Mammary epithelial cell (primary cell): ENCODE measurements at regions of chr3 and their contacts with region 1.

Region 1: DNA sequence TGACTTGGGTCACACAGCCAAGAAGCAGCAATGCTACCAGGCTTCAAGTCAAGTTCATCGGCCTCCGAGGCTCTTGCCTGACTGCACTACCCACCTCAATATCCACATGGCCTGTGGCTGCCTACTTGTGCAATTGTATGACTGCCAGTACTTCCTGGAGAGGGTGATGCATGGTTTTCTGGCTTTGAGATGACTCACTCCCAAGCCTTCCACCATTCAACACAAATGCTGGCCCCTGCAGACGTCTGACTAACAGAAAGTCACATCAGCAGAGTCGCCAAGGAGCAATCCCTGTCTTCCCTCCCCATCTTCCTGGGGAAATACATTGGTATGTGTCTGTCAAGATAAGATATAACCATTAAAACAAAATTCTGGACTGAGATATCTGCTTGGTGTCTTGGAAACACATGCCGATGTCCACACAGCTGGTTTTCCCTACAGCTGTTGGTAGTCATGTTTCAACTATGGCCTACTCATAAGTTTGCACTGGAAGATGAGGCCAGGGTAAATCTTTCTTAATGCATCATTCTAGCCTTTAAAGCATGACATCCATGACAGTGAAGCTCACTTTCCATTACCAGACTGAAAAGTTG is 79.6 kb upstream of the SPATA12 start:
- DNase-seq: peak; percentile 95
- H3K4me3 ChIP-seq: no peak overlapping the region
- H3K27ac ChIP-seq: peak overlapping the region; percentile 17
- H3K4me1 ChIP-seq: peaks cover 17% of the 10 kb centered on the region
- H3K27me3 ChIP-seq: no peaks in the 10 kb centered on the region
- CTCF ChIP-seq: no peak

Region 2: DNA sequence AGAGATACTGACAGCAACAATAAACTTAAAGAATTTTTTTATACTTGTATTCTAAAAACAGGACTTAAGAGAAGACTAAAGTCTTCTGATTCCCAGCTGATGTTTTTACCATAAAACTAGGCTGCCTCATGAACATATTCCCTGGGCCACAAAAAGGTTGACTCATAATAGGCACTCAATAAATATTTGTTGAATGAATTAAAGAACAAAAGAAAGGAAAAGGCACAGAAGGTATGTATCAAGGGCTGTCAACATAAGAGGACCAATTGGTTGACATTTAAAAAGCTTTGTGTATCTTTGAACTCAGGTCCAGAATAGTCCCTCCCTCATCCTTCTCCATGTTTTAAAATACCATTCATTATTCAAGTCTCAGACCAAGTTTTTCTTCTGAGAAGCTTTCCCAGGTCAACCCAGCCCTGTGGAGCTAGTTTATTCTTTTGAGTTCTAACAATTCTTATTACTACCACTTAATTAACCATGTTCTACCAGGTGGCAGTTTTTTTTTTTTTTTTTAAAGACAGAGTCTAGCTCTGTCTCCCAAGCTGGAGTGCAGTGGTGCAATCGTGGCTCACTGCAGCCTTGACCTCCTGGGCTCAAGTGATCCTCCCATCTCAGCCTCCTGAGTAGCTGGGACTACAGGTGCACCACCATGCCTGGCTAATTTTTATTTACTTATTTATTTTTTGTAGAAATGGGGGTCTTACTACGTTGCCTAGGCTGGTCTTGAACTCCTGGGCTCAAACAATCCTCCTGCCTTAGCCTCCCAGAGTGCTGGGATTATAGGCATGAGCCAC is 161.7 kb before region 1 on chr3:
- CTCF ChIA-PET with region 1: no interaction called
- dilution Hi-C with region 1: loop called (anchors 5 kb)
- in situ Hi-C with region 1: no loop called
- intact Hi-C with region 1: no loop called
- DNase-seq: peak; percentile 26
- H3K4me3 ChIP-seq: no peak overlapping the region
- H3K27ac ChIP-seq: no peak overlapping the region
- H3K4me1 ChIP-seq: peaks cover 24% of the 10 kb centered on the region
- H3K27me3 ChIP-seq: no peaks in the 10 kb centered on the region
- CTCF ChIP-seq: no peak

Region 3: GRCh38 chr3:56874269-56874668 is 106.6 kb before region 1 on chr3:
- CTCF ChIA-PET with region 1: no interaction called
- dilution Hi-C with region 1: no loop called
- in situ Hi-C with region 1: no loop called
- intact Hi-C with region 1: no loop called
- DNase-seq: no peak
- H3K4me3 ChIP-seq: no peak overlapping the region
- H3K27ac ChIP-seq: no peak overlapping the region
- H3K4me1 ChIP-seq: peaks cover 10% of the 10 kb centered on the region
- H3K27me3 ChIP-seq: no peaks in the 10 kb centered on the region
- CTCF ChIP-seq: no peak

Region 4: GRCh38 chr3:56887402-56888025 is 93.4 kb before region 1 on chr3:
- CTCF ChIA-PET with region 1: no interaction called
- dilution Hi-C with region 1: loop called (anchors 5 kb)
- in situ Hi-C with region 1: no loop called
- intact Hi-C with region 1: no loop called
- DNase-seq: no peak
- H3K4me3 ChIP-seq: no peak overlapping the region
- H3K27ac ChIP-seq: no peak overlapping the region
- H3K4me1 ChIP-seq: peaks cover 25% of the 10 kb centered on the region
- H3K27me3 ChIP-seq: no peaks in the 10 kb centered on the region
- CTCF ChIP-seq: no peak

Region 5: GRCh38 chr3:56915966-56916586 is 64.8 kb before region 1 on chr3:
- CTCF ChIA-PET with region 1: no interaction called
- dilution Hi-C with region 1: loop called (anchors 5 kb)
- in situ Hi-C with region 1: no loop called
- intact Hi-C with region 1: no loop called
- DNase-seq: no peak
- H3K4me3 ChIP-seq: no peak overlapping the region
- H3K27ac ChIP-seq: no peak overlapping the region
- H3K4me1 ChIP-seq: no peaks in the 10 kb centered on the region
- H3K27me3 ChIP-seq: no peaks in the 10 kb centered on the region
- CTCF ChIP-seq: no peak